Spleen (tissue), 13 donors: ENCODE measurements at regions of chr20 and their contacts with region 1.

Region 1: GRCh38 chr20:2206957-2207769 is 88.6 kb upstream of the TGM3 start:
- DNase-seq: peak; percentile 96
- H3K4me3 ChIP-seq: peak overlapping the region; percentile 47 to 84 (median 54)
- H3K27ac ChIP-seq: peak overlapping the region in 6 of 8 donors; percentile 0 to 74 (median 58)
- H3K4me1 ChIP-seq: peaks cover 0 to 49% (median 32%) of the 10 kb centered on the region in 6 donors
- H3K27me3 ChIP-seq: peaks cover 0 to 34% (median 6%) of the 10 kb centered on the region in 7 donors
- CTCF ChIP-seq: peak; percentile 66 to 91 (median 83)
- POLR2A ChIP-seq: no peak

Region 2: GRCh38 chr20:2109425-2110210 is 97.5 kb before region 1 on chr20:
- intact Hi-C with region 1: no loop called
- DNase-seq: no peak
- H3K4me3 ChIP-seq: no peak overlapping the region
- H3K27ac ChIP-seq: peak overlapping the region in 4 of 8 donors; percentile 3 to 32 (median 22)
- H3K4me1 ChIP-seq: peaks cover 51 to 100% (median 89%) of the 10 kb centered on the region in 6 donors
- H3K27me3 ChIP-seq: no peaks in the 10 kb centered on the region
- CTCF ChIP-seq: no peak
- POLR2A ChIP-seq: no peak

Region 3: DNA sequence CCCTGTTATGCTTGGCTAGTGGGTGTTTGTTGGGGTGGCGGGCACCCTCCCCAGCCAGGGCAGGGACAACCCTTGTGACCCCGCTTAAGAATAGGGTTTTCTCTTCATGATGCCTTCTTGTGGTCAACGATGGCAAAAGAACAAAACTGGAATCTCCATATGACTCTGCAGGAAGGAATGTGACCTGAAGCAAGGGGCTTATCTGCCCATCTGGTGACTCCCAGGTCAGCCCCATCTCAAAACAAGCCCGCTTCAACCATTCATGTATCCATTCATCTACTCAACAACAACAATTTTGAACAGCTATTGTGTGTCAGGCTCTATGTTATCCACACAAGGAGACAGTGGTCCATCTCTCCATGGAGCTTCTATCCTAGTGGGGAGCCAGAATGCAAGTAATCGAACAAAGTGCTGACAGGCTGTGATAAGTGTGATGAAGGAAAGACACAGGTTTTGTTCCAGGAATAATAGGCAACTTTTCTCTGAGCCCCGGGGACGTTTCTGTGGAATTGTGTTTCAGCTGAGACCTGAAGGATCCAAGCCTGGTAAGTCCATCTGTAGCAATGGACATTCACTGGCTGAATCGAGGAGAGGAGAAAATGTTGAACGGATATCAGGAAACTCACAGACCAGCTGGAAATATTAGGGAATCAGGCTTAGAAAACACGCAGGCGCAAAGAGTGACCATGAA is 142.8 kb after region 1 on chr20:
- intact Hi-C with region 1: loop called (anchors 5 kb)
- DNase-seq: no peak
- H3K4me3 ChIP-seq: no peak overlapping the region
- H3K27ac ChIP-seq: no peak overlapping the region
- H3K4me1 ChIP-seq: peaks cover 0 to 6% (median 1%) of the 10 kb centered on the region in 6 donors
- H3K27me3 ChIP-seq: peaks cover 0 to 29% (median 0%) of the 10 kb centered on the region in 7 donors
- CTCF ChIP-seq: no peak
- POLR2A ChIP-seq: no peak

Region 4: DNA sequence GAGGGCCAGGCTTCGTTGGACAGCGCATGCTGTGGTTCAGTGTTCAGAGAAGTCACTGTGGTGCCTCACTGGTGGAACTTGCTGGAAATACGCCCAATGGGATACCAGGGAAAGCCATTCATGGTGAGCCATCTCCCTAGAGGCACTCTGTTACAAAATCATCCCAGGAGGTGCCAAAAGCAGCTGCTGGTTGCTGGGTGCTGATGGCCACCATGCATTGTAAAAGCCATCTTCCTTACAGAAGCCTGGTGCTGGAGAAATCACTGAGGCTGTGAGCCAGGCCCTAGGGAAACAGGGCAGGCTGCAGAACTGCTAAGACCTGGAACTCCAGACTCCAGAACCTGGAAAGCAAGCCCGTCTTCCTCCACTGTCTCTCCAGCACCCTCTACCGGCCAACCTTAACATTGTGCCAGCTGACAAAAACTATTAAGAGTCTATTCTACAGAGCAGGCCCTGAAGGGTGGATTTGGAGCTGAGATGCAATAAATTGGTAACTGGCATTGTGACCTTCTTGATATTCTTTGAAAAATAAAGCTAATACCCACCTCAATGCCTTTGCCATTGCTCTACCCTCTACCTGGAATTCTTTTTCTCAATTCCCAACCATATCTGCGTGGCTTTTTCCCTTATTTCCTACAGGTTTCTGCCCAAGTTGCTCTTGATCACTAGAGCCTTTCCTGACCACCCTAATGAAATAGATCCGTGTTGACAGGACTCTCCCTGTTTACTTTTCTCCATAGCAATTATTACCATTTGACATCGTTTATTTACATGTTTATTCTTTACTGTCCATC is 245.0 kb after region 1 on chr20:
- intact Hi-C with region 1: loop called (anchors 5 kb)
- DNase-seq: no peak
- H3K4me3 ChIP-seq: no peak overlapping the region
- H3K27ac ChIP-seq: no peak overlapping the region
- H3K4me1 ChIP-seq: peaks cover 0 to 6% (median 0%) of the 10 kb centered on the region in 6 donors
- H3K27me3 ChIP-seq: no peaks in the 10 kb centered on the region
- CTCF ChIP-seq: peak; percentile 35 to 78 (median 67)
- POLR2A ChIP-seq: no peak